ENCODE measurements at regions of chr13 and their contacts with region 1.

Region 1: GRCh38 chr13:73058736-73059459 is at the start of gene KLF5:
- DNase-seq: peak; percentile 99
- H3K4me3 Mint-ChIP-seq: peak within 1 kb of the TSS; percentile 83
- H3K27ac Mint-ChIP-seq: peak within 1 kb of the TSS; percentile 92
- H3K4me1 Mint-ChIP-seq: peaks cover 34% of the 10 kb centered on the region
- H3K27me3 Mint-ChIP-seq: no peaks in the 10 kb centered on the region
- CTCF ChIP-seq: no peak
- total RNA-seq, gene KLF5: 197 and 226 TPM in 2 replicates

Region 2: GRCh38 chr13:72696579-72696978 is 362.3 kb before region 1 on chr13:
- CTCF ChIA-PET with region 1: no interaction called
- POLR2A ChIA-PET with region 1: no interaction called
- intact Hi-C with region 1: no loop called
- DNase-seq: peak; percentile 13
- H3K4me3 Mint-ChIP-seq: no peak overlapping the region
- H3K27ac Mint-ChIP-seq: no peak overlapping the region
- H3K4me1 Mint-ChIP-seq: no peaks in the 10 kb centered on the region
- H3K27me3 Mint-ChIP-seq: peaks cover 48% of the 10 kb centered on the region
- CTCF ChIP-seq: peak; percentile 42

Region 3: GRCh38 chr13:72727417-72728289 is 331.2 kb before region 1 on chr13 and contains the starts of genes BORA and MZT1:
- CTCF ChIA-PET with region 1: no interaction called
- POLR2A ChIA-PET with region 1: interaction called, 13 read pairs
- intact Hi-C with region 1: no loop called
- DNase-seq: peak; percentile 98
- H3K4me3 Mint-ChIP-seq: peak within 1 kb of the TSS; percentile 89
- H3K27ac Mint-ChIP-seq: peak within 1 kb of the TSS; percentile 87
- H3K4me1 Mint-ChIP-seq: peaks cover 31% of the 10 kb centered on the region
- H3K27me3 Mint-ChIP-seq: no peaks in the 10 kb centered on the region
- CTCF ChIP-seq: no peak
- total RNA-seq, gene BORA: 10.5 and 14.1 TPM in 2 replicates
- total RNA-seq, gene MZT1: 25.4 and 28.4 TPM in 2 replicates

Region 4: DNA sequence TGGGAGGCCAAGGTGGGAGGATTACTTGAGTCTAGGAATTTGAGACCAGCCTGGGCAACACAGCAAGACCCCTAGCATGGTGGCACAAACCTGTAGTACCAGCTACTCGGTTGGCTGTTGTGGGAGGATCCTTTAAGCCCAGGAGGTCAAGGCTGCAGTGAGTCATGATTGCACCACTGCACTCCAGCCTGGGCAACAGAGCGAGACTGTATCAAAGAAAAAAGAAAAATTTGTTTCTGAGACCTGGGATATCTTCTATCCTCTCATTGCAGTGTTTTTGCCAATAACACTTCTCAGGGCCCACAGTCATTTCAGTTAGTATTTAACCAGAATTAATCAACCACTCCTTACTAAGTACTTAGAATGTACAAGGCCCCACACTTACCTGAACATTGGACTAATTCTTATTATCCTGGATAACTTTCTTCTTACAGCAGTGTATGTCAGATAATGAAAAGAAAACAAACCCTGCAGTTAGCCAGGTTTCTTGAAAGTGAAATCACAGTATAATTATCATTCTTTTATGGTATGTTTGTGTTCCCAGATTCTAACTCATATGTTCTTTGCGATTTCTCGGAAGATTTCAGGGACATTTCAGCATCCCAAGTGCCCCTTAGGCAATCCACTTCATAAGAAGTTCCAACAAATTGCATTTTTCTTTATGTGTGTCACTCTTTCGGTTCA is 75.7 kb before region 1 on chr13:
- CTCF ChIA-PET with region 1: no interaction called
- POLR2A ChIA-PET with region 1: interaction called, 42 read pairs
- intact Hi-C with region 1: loop called (anchors 1 kb)
- DNase-seq: peak; percentile 88
- H3K4me3 Mint-ChIP-seq: peak overlapping the region; percentile 57
- H3K27ac Mint-ChIP-seq: peak overlapping the region; percentile 91
- H3K4me1 Mint-ChIP-seq: peaks cover 11% of the 10 kb centered on the region
- H3K27me3 Mint-ChIP-seq: no peaks in the 10 kb centered on the region
- CTCF ChIP-seq: no peak

Region 5: DNA sequence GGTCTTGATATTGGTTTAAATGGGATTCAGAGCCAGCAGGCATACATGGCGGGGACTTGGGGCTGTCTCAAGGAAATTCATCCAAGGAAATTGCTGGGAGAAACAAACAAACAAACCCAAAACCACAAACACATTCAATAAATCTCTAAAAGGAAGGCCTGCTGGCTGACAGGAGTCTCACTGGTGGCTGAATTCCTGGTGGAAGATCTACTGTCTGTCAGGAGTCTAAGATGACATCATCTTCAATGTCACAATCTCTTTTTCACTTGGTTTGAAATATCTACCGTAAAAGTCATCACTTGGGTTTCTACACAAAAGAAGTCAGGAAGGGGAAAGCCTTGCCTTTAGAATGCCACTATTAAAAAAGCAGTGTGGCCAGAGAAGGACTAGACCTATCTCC is 87.8 kb after region 1 on chr13:
- CTCF ChIA-PET with region 1: no interaction called
- POLR2A ChIA-PET with region 1: no interaction called
- intact Hi-C with region 1: no loop called
- DNase-seq: peak; percentile 50
- H3K4me3 Mint-ChIP-seq: no peak overlapping the region
- H3K27ac Mint-ChIP-seq: no peak overlapping the region
- H3K4me1 Mint-ChIP-seq: peaks cover 9% of the 10 kb centered on the region
- H3K27me3 Mint-ChIP-seq: no peaks in the 10 kb centered on the region
- CTCF ChIP-seq: no peak

Region 6: DNA sequence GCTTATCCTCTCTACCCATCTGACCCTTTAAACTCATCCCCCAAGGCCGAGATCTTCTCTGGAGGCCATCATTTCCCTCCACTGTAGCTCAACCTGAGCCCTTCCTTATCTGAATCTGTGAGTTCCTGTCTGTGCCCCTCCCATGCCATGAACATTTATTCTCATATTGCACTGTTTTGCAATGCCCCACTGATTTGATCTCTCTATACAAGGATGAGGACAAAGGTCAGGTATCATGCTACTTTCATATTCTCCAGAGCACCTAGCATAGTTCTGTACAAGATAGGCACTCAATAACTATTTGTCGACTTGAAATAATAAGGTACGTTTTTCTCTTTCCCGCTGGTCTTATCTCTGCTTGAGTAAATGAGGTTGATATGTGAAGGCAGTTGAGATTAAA is 135.4 kb after region 1 on chr13:
- CTCF ChIA-PET with region 1: interaction called, 3 read pairs
- POLR2A ChIA-PET with region 1: interaction called, 32 read pairs
- intact Hi-C with region 1: no loop called
- DNase-seq: no peak
- H3K4me3 Mint-ChIP-seq: no peak overlapping the region
- H3K27ac Mint-ChIP-seq: no peak overlapping the region
- H3K4me1 Mint-ChIP-seq: peaks cover 21% of the 10 kb centered on the region
- H3K27me3 Mint-ChIP-seq: no peaks in the 10 kb centered on the region
- CTCF ChIP-seq: no peak

Region 7: GRCh38 chr13:73329355-73329754 is 270.5 kb after region 1 on chr13:
- CTCF ChIA-PET with region 1: interaction called, 3 read pairs
- POLR2A ChIA-PET with region 1: interaction called, 32 read pairs
- intact Hi-C with region 1: no loop called
- DNase-seq: no peak
- H3K4me3 Mint-ChIP-seq: no peak overlapping the region
- H3K27ac Mint-ChIP-seq: no peak overlapping the region
- H3K4me1 Mint-ChIP-seq: peaks cover 22% of the 10 kb centered on the region
- H3K27me3 Mint-ChIP-seq: no peaks in the 10 kb centered on the region
- CTCF ChIP-seq: no peak

Region 8: GRCh38 chr13:73428137-73428536 is 369.2 kb after region 1 on chr13:
- CTCF ChIA-PET with region 1: interaction called, 4 read pairs
- POLR2A ChIA-PET with region 1: interaction called, 56 read pairs
- intact Hi-C with region 1: no loop called
- DNase-seq: peak; percentile 81
- H3K4me3 Mint-ChIP-seq: peak overlapping the region; percentile 7
- H3K27ac Mint-ChIP-seq: peak overlapping the region; percentile 79
- H3K4me1 Mint-ChIP-seq: peaks cover 36% of the 10 kb centered on the region
- H3K27me3 Mint-ChIP-seq: no peaks in the 10 kb centered on the region
- CTCF ChIP-seq: no peak

Region 9: GRCh38 chr13:73708393-73708985 is 649.6 kb after region 1 on chr13:
- CTCF ChIA-PET with region 1: interaction called, 4 read pairs
- POLR2A ChIA-PET with region 1: interaction called, 80 read pairs
- intact Hi-C with region 1: loop called (anchors 1 kb)
- DNase-seq: peak; percentile 84
- H3K4me3 Mint-ChIP-seq: no peak overlapping the region
- H3K27ac Mint-ChIP-seq: no peak overlapping the region
- H3K4me1 Mint-ChIP-seq: peaks cover 22% of the 10 kb centered on the region
- H3K27me3 Mint-ChIP-seq: no peaks in the 10 kb centered on the region
- CTCF ChIP-seq: peak; percentile 92